CD8-positive, alpha-beta T cell (primary cell): ENCODE measurements at regions of chr13 and their contacts with region 1.

Region 1: DNA sequence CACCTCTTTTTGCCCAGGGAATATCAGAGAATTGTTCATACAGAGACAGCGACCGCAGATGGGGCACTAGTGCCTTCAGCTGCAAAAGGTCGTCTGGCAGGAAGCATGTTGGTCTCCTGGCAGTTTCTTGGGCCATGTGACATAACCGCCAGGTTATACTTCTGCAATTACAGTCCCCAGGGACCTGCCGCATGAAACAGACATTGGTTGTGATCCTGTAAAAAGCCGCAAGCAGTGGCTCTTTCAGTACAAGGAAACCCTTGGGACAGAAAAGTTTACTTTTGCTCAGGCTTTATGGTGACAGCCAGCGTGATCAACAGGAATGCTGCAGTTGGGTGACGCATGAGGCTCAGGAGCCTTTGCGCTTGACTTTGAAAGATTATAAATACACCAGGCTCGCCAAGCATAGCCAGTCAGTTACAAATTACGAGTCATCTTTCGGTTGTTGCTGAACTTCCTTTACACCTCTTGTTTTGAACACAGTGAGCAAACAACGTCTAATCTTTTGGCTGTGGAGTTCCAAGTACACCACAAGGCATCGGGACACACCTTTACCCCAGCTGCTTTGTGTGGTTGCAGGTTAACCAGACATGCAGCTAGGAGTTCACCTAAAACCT is 50.5 kb upstream of the UBE2L5 start:
- DNase-seq: peak; percentile 39 to 90 (median 75)
- ATAC-seq: peak; percentile 55
- H3K4me3 ChIP-seq: peak overlapping the region; percentile 2 to 9
- H3K4me3 Mint-ChIP-seq: peak overlapping the region; percentile 67
- H3K27ac ChIP-seq: peak overlapping the region; percentile 53 to 66
- H3K27ac Mint-ChIP-seq: peak overlapping the region; percentile 94
- H3K4me1 ChIP-seq: peaks cover 77% of the 10 kb centered on the region
- H3K4me1 Mint-ChIP-seq: peaks cover 82% of the 10 kb centered on the region
- H3K27me3 ChIP-seq: no peaks in the 10 kb centered on the region
- H3K27me3 Mint-ChIP-seq: no peaks in the 10 kb centered on the region
- CTCF ChIP-seq: no peak

Region 2: GRCh38 chr13:30306762-30307193 is 65.0 kb before region 1 on chr13:
- CTCF ChIA-PET with region 1: no interaction called
- POLR2A ChIA-PET with region 1: interaction called, 5 read pairs
- intact Hi-C with region 1: loop called (anchors 2 to 10 kb)
- DNase-seq: peak; percentile 80 to 94 (median 92)
- ATAC-seq: peak; percentile 86
- H3K4me3 ChIP-seq: peak overlapping the region; percentile 79 to 97
- H3K4me3 Mint-ChIP-seq: peak overlapping the region; percentile 89
- H3K27ac ChIP-seq: peak overlapping the region; percentile 56 to 60
- H3K27ac Mint-ChIP-seq: peak overlapping the region; percentile 79
- H3K4me1 ChIP-seq: peaks cover 5% of the 10 kb centered on the region
- H3K4me1 Mint-ChIP-seq: peaks cover 8% of the 10 kb centered on the region
- H3K27me3 ChIP-seq: no peaks in the 10 kb centered on the region
- H3K27me3 Mint-ChIP-seq: no peaks in the 10 kb centered on the region
- CTCF ChIP-seq: no peak

Region 3: DNA sequence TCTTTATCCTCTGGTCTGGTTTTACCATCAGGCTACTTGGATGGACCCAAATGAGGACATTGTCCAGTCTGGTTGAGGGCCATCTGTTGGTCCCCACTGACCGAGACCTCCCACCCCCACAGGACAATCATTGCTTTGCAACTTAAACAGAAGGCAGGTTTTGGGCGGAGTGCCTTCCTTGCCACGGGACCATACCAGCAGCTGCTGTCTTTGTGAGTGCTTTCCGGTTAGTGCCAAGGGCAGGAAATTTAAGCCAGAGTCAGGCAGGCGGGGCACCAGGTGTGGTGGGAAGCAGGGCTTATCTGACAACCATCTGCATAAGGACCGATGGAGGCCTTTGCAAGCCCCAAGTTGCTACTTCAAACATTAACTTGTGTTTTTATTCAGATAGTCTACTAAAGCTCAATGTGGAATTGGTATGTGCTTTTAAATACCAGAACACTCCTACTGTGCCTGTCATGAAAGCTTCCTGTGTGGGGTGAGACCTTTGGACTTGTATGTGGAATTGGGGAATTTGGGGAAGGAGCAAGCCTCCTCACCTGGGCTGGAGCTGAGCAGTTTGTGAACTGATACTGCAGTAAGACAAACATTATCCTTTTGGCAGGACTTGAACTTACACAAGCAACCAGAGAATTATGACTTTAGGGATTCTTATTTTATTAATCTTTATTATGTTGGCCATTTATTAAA is 11.2 kb after region 1 on chr13:
- CTCF ChIA-PET with region 1: interaction called, 31 read pairs
- POLR2A ChIA-PET with region 1: interaction called, 131 read pairs
- intact Hi-C with region 1: no loop called
- DNase-seq: peak in 2 of 9 experiments; percentile 18 to 55
- ATAC-seq: no peak
- H3K4me3 ChIP-seq: no peak overlapping the region
- H3K4me3 Mint-ChIP-seq: peak overlapping the region; percentile 29
- H3K27ac ChIP-seq: no peak overlapping the region
- H3K27ac Mint-ChIP-seq: peak overlapping the region; percentile 8
- H3K4me1 ChIP-seq: peaks cover 28% of the 10 kb centered on the region
- H3K4me1 Mint-ChIP-seq: peaks cover 55% of the 10 kb centered on the region
- H3K27me3 ChIP-seq: no peaks in the 10 kb centered on the region
- H3K27me3 Mint-ChIP-seq: no peaks in the 10 kb centered on the region
- CTCF ChIP-seq: no peak

Region 4: GRCh38 chr13:30395192-30396084 is 23.7 kb after region 1 on chr13:
- CTCF ChIA-PET with region 1: interaction called, 12 read pairs
- POLR2A ChIA-PET with region 1: interaction called, 131 read pairs
- intact Hi-C with region 1: loop called in 1 of 2 experiments (anchors 1 kb)
- DNase-seq: peak; percentile 44 to 88 (median 79)
- ATAC-seq: peak; percentile 62
- H3K4me3 ChIP-seq: peak overlapping the region; percentile 60 to 80
- H3K4me3 Mint-ChIP-seq: peak overlapping the region; percentile 89
- H3K27ac ChIP-seq: peak overlapping the region; percentile 83 to 84
- H3K27ac Mint-ChIP-seq: peak overlapping the region; percentile 95
- H3K4me1 ChIP-seq: peaks cover 21% of the 10 kb centered on the region
- H3K4me1 Mint-ChIP-seq: peaks cover 50% of the 10 kb centered on the region
- H3K27me3 ChIP-seq: no peaks in the 10 kb centered on the region
- H3K27me3 Mint-ChIP-seq: no peaks in the 10 kb centered on the region
- CTCF ChIP-seq: no peak

Region 5: DNA sequence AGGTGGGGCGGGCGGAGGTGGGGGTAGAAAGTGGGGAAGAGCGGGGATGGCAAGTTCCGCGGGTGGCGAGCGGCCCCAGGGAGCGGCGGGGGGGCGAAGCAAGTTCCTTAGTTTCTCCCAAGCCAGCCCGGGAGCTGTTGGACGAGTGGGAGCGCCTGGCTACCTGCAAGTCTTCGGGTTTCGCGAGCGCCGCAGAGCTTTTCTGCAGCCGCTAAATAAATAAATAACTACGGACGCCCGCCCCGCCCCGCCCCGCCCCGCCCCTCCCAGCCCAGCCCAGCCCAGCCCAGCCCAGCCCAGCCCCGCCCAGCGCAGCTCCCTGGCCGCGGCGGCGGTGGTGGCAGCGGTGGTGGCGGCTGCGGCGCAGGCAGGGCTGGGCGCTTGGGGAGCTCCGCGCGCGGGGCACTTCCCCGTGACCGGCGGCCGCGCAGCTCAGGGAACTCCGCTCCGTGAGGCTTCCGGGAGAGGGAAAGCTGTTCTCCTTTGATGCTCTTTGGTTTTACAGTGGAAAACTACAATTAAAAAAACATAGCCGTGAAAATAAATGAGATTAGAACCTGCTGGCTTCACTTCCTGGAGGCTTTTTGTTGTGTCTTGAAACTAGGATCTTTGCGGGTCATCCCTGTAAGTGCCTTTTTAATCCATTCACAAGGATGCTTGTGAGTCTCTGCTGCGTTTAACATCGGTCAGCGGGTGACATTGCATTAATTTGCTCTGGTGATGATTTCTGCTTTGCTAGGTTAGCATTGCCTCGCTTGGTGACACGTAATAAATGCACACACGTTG is 50.5 kb after region 1 on chr13 and contains the start of gene UBE2L5:
- CTCF ChIA-PET with region 1: interaction called, 6 read pairs
- POLR2A ChIA-PET with region 1: interaction called, 4 read pairs
- intact Hi-C with region 1: loop called (anchors 1 to 5 kb)
- DNase-seq: peak; percentile 31 to 82 (median 59)
- ATAC-seq: peak; percentile 88
- H3K4me3 ChIP-seq: peak within 1 kb of the TSS; percentile 41 to 58
- H3K4me3 Mint-ChIP-seq: peak within 1 kb of the TSS; percentile 88
- H3K27ac ChIP-seq: peak within 1 kb of the TSS; percentile 14 to 24
- H3K27ac Mint-ChIP-seq: peak within 1 kb of the TSS; percentile 82
- H3K4me1 ChIP-seq: peaks cover 4% of the 10 kb centered on the region
- H3K4me1 Mint-ChIP-seq: peaks cover 22% of the 10 kb centered on the region
- H3K27me3 ChIP-seq: no peaks in the 10 kb centered on the region
- H3K27me3 Mint-ChIP-seq: no peaks in the 10 kb centered on the region
- CTCF ChIP-seq: no peak
- total RNA-seq, gene UBE2L5: not detected

Region 6: DNA sequence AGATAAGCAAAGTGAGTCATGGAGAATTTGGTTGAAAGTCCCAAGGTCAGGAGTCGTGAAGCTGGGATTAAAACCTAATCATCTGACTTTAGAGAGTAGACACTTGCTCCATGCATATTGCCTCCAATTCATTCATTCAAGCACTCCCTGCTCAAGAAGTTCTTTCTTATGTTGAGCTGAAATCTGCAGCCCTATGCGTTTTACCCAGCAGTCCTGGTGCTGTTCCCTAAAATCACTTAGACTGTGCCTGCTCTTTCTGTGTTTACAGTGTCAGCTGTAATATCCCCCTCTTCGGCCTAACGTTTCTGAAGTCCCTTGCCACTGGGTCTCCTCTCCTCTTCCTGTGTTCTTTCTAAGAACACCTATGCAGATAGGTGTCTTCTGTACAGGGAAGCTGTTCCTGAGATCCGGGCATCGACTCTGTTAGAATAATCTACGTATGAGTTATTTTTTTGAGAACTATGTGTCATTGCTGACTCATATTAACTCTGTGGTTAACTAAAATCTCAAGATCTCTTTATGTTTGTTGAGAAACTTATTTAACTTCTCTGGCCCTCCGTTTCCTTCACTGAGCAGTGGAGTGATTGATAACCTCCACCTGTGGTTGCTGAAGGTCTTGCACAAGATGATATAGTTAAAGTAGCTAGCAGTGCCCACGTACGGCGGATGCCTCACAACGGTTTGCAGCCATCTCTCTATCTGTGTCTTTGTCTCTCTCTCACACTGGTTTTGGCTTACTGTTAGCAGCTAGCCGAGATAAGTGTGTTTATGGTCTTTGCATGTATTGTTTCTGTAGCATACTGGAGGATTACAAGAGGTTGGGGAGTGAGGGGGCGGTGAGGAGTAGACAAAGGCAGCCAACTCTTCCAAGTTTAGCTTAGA is 368.2 kb after region 1 on chr13:
- CTCF ChIA-PET with region 1: no interaction called
- POLR2A ChIA-PET with region 1: no interaction called
- intact Hi-C with region 1: loop called in 1 of 2 experiments (anchors 5 kb)
- DNase-seq: peak in 8 of 9 experiments; percentile 34 to 87 (median 62)
- ATAC-seq: peak; percentile 54
- H3K4me3 ChIP-seq: peak overlapping the region; percentile 25 to 33
- H3K4me3 Mint-ChIP-seq: peak overlapping the region; percentile 73
- H3K27ac ChIP-seq: peak overlapping the region; percentile 28 to 68
- H3K27ac Mint-ChIP-seq: peak overlapping the region; percentile 82
- H3K4me1 ChIP-seq: peaks cover 73% of the 10 kb centered on the region
- H3K4me1 Mint-ChIP-seq: peaks cover 83% of the 10 kb centered on the region
- H3K27me3 ChIP-seq: no peaks in the 10 kb centered on the region
- H3K27me3 Mint-ChIP-seq: no peaks in the 10 kb centered on the region
- CTCF ChIP-seq: no peak